ENCODE measurements at regions of chr12 and their contacts with region 1.

Region 1: GRCh38 chr12:6613776-6614512 is 6.8 kb upstream of the CHD4 start:
- DNase-seq: peak; percentile 81
- H3K4me3 ChIP-seq: peak overlapping the region in 2 of 4 donors; percentile 19 to 57
- H3K27ac ChIP-seq: peak overlapping the region; percentile 81 to 97 (median 94)
- H3K4me1 ChIP-seq: peaks cover 26 to 38% (median 30%) of the 10 kb centered on the region in 3 donors
- H3K27me3 ChIP-seq: no peaks in the 10 kb centered on the region
- CTCF ChIP-seq: peak in 2 of 6 experiments; percentile 3 to 5
- POLR2A ChIP-seq: peak in 1 of 4 donors; percentile 12

Region 2: GRCh38 chr12:6662906-6663742 is 49.2 kb after region 1 on chr12 and contains the start of gene ING4:
- intact Hi-C with region 1: loop called (anchors 10 kb)
- DNase-seq: peak; percentile 93
- H3K4me3 ChIP-seq: peak within 1 kb of the TSS; percentile 68 to 89 (median 76)
- H3K27ac ChIP-seq: peak within 1 kb of the TSS; percentile 80 to 90 (median 86)
- H3K4me1 ChIP-seq: peaks cover 7 to 20% (median 8%) of the 10 kb centered on the region in 3 donors
- H3K27me3 ChIP-seq: no peaks in the 10 kb centered on the region
- CTCF ChIP-seq: peak in 1 of 6 experiments; percentile 19
- POLR2A ChIP-seq: peak in 1 of 4 donors; percentile 30
- total RNA-seq, gene ING4: 8.3 to 37.0 (median 26.9) TPM

Measured in esophagus squamous epithelium (tissue), 5 donors.